ENCODE measurements at regions of chr11 and their contacts with region 1.

Region 1: DNA sequence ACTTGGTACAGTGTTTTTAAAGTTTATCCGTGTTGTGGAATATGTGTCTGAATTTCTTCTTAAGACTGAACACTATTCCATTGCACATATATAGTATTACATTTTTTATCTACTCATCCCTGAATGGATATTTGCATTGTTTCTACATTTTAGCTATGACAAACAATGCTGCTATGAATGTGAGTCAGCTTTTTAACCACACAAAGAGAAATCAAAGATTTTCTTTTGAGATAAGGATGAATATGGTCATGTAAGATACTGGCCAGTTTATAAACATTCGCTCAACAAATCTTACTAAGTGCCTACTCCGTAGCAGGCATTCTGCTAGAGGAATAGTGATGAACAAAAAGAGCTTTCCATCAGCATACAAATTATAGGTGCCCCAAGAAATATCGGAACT is 16.5 kb upstream of the OR9G4 start:
- DNase-seq: no peak
- ATAC-seq: no peak
- H3K4me3 ChIP-seq: no peak overlapping the region
- H3K27ac ChIP-seq: no peak overlapping the region
- H3K4me1 ChIP-seq: no peaks in the 10 kb centered on the region
- H3K27me3 ChIP-seq: no peaks in the 10 kb centered on the region
- CTCF ChIP-seq: no peak
- EP300 ChIP-seq: no peak
- POLR2A ChIP-seq: no peak
- RAD21 ChIP-seq: no peak

Region 2: DNA sequence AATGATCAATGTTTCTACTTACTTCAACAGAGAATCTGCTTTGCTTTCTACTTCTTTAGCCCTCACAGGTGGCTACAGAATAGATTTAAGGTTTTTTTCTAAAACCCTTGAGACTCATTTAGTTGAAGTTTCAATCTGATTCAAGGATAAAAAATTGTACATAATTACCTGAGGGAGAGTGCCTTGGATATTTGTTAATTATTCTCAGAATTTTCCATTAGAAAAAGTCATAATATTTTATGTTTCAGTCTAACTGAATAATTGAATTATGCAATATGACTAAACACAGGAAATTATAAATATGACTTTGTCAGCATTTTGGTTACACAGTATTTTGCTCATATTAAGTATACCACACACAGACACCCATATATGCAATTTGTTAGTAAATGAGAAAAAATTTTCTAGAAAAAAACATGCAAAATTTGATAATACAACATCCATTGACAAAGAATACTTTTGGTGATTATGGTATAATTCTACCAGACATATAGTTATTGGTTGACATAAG is 624.8 kb before region 1 on chr11 and contains the start of gene OR8J3:
- CTCF ChIA-PET with region 1: no interaction called
- POLR2A ChIA-PET with region 1: no interaction called
- in situ Hi-C with region 1: no loop called
- intact Hi-C with region 1: loop called (anchors 5 kb)
- DNase-seq: no peak
- ATAC-seq: no peak
- H3K4me3 ChIP-seq: no peak within 1 kb of the TSS
- H3K27ac ChIP-seq: no peak within 1 kb of the TSS
- H3K4me1 ChIP-seq: no peaks in the 10 kb centered on the region
- H3K27me3 ChIP-seq: no peaks in the 10 kb centered on the region
- CTCF ChIP-seq: no peak
- EP300 ChIP-seq: no peak
- POLR2A ChIP-seq: no peak
- RAD21 ChIP-seq: no peak
- total RNA-seq, gene OR8J3: not detected in 2 replicates

Region 3: GRCh38 chr11:56292154-56292553 is 472.8 kb before region 1 on chr11 and contains the start of gene OR8H1:
- CTCF ChIA-PET with region 1: no interaction called
- POLR2A ChIA-PET with region 1: no interaction called
- in situ Hi-C with region 1: no loop called
- intact Hi-C with region 1: no loop called
- DNase-seq: no peak
- ATAC-seq: no peak
- H3K4me3 ChIP-seq: no peak within 1 kb of the TSS
- H3K27ac ChIP-seq: no peak within 1 kb of the TSS
- H3K4me1 ChIP-seq: no peaks in the 10 kb centered on the region
- H3K27me3 ChIP-seq: no peaks in the 10 kb centered on the region
- CTCF ChIP-seq: no peak
- EP300 ChIP-seq: no peak
- POLR2A ChIP-seq: no peak
- RAD21 ChIP-seq: no peak
- total RNA-seq, gene OR8H1: not detected in 2 replicates

Region 4: GRCh38 chr11:56799691-56800210 is 34.8 kb after region 1 on chr11:
- CTCF ChIA-PET with region 1: no interaction called
- POLR2A ChIA-PET with region 1: no interaction called
- in situ Hi-C with region 1: no loop called
- intact Hi-C with region 1: no loop called
- DNase-seq: no peak
- ATAC-seq: no peak
- H3K4me3 ChIP-seq: no peak overlapping the region
- H3K27ac ChIP-seq: no peak overlapping the region
- H3K4me1 ChIP-seq: no peaks in the 10 kb centered on the region
- H3K27me3 ChIP-seq: no peaks in the 10 kb centered on the region
- CTCF ChIP-seq: no peak
- EP300 ChIP-seq: no peak
- POLR2A ChIP-seq: no peak
- RAD21 ChIP-seq: no peak